Endothelial cell of umbilical vein (primary cell): ENCODE measurements at regions of chr4 and their contacts with region 1.

Region 1: GRCh38 chr4:173505924-173506518 is 24.0 kb downstream of the HAND2 start:
- DNase-seq: peak; percentile 25
- H3K4me3 ChIP-seq: no peak overlapping the region
- H3K27ac ChIP-seq: no peak overlapping the region
- H3K4me1 ChIP-seq: peaks cover 17% of the 10 kb centered on the region
- H3K27me3 ChIP-seq: peaks cover 83 to 96% of the 10 kb centered on the region in 2 experiments
- CTCF ChIP-seq: peak; percentile 57 to 71
- POLR2A ChIP-seq: no peak

Region 2: DNA sequence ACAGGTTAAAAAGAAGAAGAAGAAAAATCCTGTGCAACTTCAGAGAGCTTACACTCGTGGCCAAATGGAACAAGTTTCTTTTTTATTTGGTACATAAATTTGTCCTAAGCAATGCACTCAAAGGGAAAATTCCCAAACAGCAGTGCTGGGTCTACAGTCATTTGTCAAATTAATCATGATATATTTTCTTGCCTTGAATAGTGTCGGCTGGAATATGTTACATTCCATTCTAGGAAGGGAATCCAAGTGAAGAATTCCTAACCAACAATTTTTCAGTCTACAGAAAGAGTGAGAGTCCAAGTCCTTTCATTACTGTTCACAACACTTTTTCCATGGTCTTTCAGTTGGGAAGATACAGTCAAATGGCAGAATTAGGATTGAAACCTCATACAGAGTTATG is 39.9 kb before region 1 on chr4:
- CTCF ChIA-PET with region 1: no interaction called
- POLR2A ChIA-PET with region 1: no interaction called
- dilution Hi-C with region 1: no loop called
- intact Hi-C with region 1: no loop called
- DNase-seq: no peak
- H3K4me3 ChIP-seq: no peak overlapping the region
- H3K27ac ChIP-seq: no peak overlapping the region
- H3K4me1 ChIP-seq: no peaks in the 10 kb centered on the region
- H3K27me3 ChIP-seq: no peaks in the 10 kb centered on the region
- CTCF ChIP-seq: no peak
- POLR2A ChIP-seq: no peak

Region 3: DNA sequence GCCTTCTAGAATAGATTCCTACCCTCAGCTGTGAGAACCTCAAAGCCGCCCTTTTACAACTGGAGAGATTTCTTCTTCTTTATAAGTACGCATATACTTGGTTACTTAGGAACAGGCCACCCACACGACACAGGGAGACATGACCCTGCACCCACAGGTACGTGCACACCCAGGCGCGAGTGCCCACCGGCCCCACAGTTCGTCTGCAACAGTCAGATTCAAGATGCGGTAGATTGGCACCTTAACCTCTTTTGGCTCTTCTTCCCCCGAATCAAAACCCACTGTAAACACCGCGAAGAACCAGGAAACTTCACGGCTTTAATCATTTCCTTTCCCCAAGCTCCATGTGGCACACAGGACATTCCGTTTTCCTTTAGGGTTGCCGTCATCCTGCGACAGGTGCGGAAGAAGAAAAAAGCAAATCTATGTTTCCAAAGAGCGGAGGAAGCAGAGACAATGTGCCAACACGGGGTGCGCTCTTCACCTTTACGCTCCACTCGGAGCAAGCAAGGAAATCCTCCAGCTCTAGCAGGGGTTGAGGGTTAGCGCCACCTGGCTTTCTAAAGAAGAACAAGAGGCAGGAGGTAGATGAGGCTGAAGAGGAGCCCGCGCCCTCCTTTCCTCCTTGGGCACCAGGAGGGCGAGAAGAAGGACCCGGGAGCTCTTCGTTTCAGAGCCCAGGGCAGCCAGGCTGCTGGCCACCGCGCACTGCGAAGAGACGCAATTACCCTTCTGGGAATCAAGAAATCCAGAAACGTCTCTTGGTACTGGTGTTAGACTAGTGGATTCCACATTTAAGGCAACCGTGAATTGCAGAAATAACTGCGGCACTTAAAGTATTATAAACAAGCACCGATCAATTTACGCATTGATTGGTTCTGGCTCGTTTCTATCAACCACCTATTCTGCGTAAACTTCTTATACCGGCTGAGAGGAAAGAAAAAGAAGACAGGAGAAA is 11.7 kb before region 1 on chr4:
- CTCF ChIA-PET with region 1: interaction called, 19 read pairs
- POLR2A ChIA-PET with region 1: no interaction called
- dilution Hi-C with region 1: no loop called
- intact Hi-C with region 1: no loop called
- DNase-seq: peak; percentile 53
- H3K4me3 ChIP-seq: peak overlapping the region; percentile 18 to 51 (median 24)
- H3K27ac ChIP-seq: no peak overlapping the region
- H3K4me1 ChIP-seq: peaks cover 14% of the 10 kb centered on the region
- H3K27me3 ChIP-seq: peaks cover 22 to 30% of the 10 kb centered on the region in 2 experiments
- CTCF ChIP-seq: peak; percentile 58 to 77
- POLR2A ChIP-seq: no peak

Region 4: GRCh38 chr4:173827707-173828106 is 321.7 kb after region 1 on chr4:
- CTCF ChIA-PET with region 1: interaction called, 4 read pairs
- POLR2A ChIA-PET with region 1: no interaction called
- dilution Hi-C with region 1: no loop called
- intact Hi-C with region 1: loop called (anchors 1 kb)
- DNase-seq: no peak
- H3K4me3 ChIP-seq: no peak overlapping the region
- H3K27ac ChIP-seq: no peak overlapping the region
- H3K4me1 ChIP-seq: no peaks in the 10 kb centered on the region
- H3K27me3 ChIP-seq: no peaks in the 10 kb centered on the region
- CTCF ChIP-seq: no peak
- POLR2A ChIP-seq: no peak

Region 5: GRCh38 chr4:174120446-174121295 is 614.6 kb after region 1 on chr4:
- CTCF ChIA-PET with region 1: interaction called, 23 read pairs
- POLR2A ChIA-PET with region 1: no interaction called
- dilution Hi-C with region 1: no loop called
- intact Hi-C with region 1: loop called (anchors 1 kb)
- DNase-seq: peak; percentile 65
- H3K4me3 ChIP-seq: peak overlapping the region in 1 of 3 experiments; percentile 39
- H3K27ac ChIP-seq: no peak overlapping the region
- H3K4me1 ChIP-seq: no peaks in the 10 kb centered on the region
- H3K27me3 ChIP-seq: peaks cover 7 to 26% of the 10 kb centered on the region in 2 experiments
- CTCF ChIP-seq: peak; percentile 45 to 50
- POLR2A ChIP-seq: no peak

Region 6: DNA sequence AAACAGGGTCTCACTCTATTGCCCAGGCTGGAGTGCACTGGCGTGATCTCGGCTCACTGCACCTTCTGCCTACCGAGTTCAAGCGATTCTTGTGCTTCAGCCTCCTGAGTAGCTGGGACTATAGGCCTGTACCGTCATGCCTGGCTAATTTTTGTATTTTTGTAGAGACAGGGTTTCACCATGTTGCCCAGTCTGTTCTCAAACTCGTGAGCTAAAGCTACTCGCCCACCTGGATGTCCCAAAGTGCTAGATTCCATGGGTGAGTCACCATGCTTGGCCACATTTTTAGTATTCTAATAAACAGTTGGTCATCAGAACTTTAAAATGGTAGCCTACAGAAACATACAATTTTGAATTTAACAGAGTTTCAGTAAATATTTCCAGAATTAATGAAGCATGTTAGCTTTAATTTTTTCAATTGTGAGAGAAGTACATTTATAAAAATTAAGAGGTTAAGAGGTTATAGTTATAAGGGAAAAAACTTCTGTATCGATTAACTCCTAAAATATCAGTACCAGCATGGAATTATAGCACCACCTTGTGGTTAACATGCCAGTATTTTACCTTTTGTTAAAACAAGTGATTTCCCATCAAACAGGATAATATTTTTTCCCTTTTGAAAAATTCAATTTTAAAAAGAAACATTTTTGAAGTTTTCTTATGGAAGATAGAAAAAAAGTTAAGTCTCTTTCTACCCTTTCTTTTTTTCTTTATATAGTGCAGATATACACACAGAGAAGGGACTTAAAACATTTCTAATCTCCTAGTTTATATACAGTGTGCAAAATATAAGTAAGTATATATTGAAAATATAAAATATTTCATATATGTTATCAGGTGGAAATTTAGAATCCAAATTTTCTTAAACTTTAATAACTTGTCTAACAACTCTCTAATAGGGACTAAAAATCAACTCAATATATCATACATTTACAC is 813.1 kb after region 1 on chr4:
- CTCF ChIA-PET with region 1: no interaction called
- POLR2A ChIA-PET with region 1: no interaction called
- dilution Hi-C with region 1: no loop called
- intact Hi-C with region 1: loop called (anchors 1 kb)
- DNase-seq: peak; percentile 45
- H3K4me3 ChIP-seq: no peak overlapping the region
- H3K27ac ChIP-seq: no peak overlapping the region
- H3K4me1 ChIP-seq: peaks cover 3% of the 10 kb centered on the region
- H3K27me3 ChIP-seq: no peaks in the 10 kb centered on the region
- CTCF ChIP-seq: peak; percentile 21 to 25
- POLR2A ChIP-seq: no peak